AG04449 (cell line): ENCODE measurements at regions of chr2 and their contacts with region 1.

Region 1: GRCh38 chr2:127197475-127198385 is 22.4 kb downstream of the CYP27C1 start:
- DNase-seq: no peak
- H3K4me3 ChIP-seq: no peak overlapping the region
- CTCF ChIP-seq: peak; percentile 90

Region 2: GRCh38 chr2:127187081-127187775 is 10.5 kb before region 1 on chr2:
- CTCF ChIA-PET with region 1: interaction called, 16 read pairs
- POLR2A ChIA-PET with region 1: no interaction called
- DNase-seq: no peak
- H3K4me3 ChIP-seq: no peak overlapping the region
- CTCF ChIP-seq: no peak

Region 3: GRCh38 chr2:127208313-127208712 is 10.6 kb after region 1 on chr2:
- CTCF ChIA-PET with region 1: interaction called, 11 read pairs
- POLR2A ChIA-PET with region 1: no interaction called
- DNase-seq: no peak
- H3K4me3 ChIP-seq: no peak overlapping the region
- CTCF ChIP-seq: no peak